Ovary (tissue), 10 donors: ENCODE measurements at regions of chr4 and their contacts with region 1.

Region 1: DNA sequence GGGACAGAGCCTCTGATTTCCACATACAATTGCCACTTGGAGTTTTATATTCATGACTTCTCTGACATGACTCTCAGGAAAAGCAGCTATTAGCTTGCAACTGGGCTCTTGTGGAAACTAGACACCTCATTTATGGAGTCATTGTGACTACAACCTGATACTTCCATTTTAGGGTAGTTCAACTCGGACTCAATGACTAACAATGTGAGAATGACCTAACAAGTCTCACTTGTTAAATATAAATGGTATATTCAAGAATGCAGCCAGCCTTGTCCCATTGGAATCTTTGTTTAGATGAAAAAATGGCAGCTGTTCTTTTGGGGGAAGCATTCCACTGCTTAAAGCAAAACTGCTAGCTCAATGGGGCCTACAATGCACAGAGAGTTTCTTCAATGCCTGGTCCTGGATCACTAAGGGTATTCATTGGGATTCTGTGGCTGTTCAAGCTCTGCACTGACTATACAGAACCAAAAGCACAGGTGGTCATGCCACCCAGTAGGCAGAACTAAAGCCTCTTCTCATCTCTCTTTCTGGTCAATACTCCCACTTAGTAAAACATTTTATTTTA is 36.5 kb upstream of the GLRA3 start:
- DNase-seq: no peak
- H3K4me3 ChIP-seq: no peak overlapping the region
- H3K27ac ChIP-seq: no peak overlapping the region
- H3K4me1 ChIP-seq: no peaks in the 10 kb centered on the region
- H3K27me3 ChIP-seq: no peaks in the 10 kb centered on the region
- CTCF ChIP-seq: no peak
- EP300 ChIP-seq: no peak
- POLR2A ChIP-seq: no peak

Region 2: GRCh38 chr4:174834477-174834876 is 31.0 kb before region 1 on chr4:
- intact Hi-C with region 1: loop called in 1 of 4 experiments (anchors 5 kb)
- DNase-seq: no peak
- H3K4me3 ChIP-seq: no peak overlapping the region
- H3K27ac ChIP-seq: no peak overlapping the region
- H3K4me1 ChIP-seq: no peaks in the 10 kb centered on the region
- H3K27me3 ChIP-seq: no peaks in the 10 kb centered on the region
- CTCF ChIP-seq: no peak
- EP300 ChIP-seq: no peak
- POLR2A ChIP-seq: no peak

Region 3: GRCh38 chr4:174882317-174882992 is 17.0 kb after region 1 on chr4:
- intact Hi-C with region 1: no loop called
- DNase-seq: no peak
- H3K4me3 ChIP-seq: no peak overlapping the region
- H3K27ac ChIP-seq: no peak overlapping the region
- H3K4me1 ChIP-seq: no peaks in the 10 kb centered on the region
- H3K27me3 ChIP-seq: no peaks in the 10 kb centered on the region
- CTCF ChIP-seq: no peak
- EP300 ChIP-seq: no peak
- POLR2A ChIP-seq: no peak